Heart right ventricle (tissue), 16 donors: ENCODE measurements at regions of chr4 and their contacts with region 1.

Region 1: DNA sequence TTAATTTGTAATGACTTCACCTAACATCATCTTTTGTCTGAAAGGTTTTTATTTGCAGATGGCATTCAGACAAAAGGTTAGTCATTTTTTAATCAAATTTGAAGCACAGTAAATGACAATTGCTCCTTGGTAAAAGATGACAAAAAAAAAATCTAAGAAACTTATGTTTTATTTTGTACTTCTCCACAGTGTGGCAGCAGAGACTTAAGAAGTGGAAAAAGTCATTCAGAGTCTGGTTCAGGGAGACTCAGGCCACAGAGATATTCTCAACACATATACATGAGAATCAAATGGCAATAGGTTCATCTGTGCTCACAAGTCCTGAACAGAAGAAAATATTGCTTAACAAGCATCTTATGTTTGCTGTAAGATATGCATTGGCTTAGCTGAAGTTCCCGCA is 436.2 kb downstream of the KCNIP4 start:
- DNase-seq: no peak
- ATAC-seq: no peak
- H3K4me3 ChIP-seq: no peak overlapping the region
- H3K27ac ChIP-seq: no peak overlapping the region
- H3K4me1 ChIP-seq: no peaks in the 10 kb centered on the region
- H3K27me3 ChIP-seq: no peaks in the 10 kb centered on the region
- CTCF ChIP-seq: peak in 8 of 9 donors; percentile 12 to 59 (median 37)

Region 2: DNA sequence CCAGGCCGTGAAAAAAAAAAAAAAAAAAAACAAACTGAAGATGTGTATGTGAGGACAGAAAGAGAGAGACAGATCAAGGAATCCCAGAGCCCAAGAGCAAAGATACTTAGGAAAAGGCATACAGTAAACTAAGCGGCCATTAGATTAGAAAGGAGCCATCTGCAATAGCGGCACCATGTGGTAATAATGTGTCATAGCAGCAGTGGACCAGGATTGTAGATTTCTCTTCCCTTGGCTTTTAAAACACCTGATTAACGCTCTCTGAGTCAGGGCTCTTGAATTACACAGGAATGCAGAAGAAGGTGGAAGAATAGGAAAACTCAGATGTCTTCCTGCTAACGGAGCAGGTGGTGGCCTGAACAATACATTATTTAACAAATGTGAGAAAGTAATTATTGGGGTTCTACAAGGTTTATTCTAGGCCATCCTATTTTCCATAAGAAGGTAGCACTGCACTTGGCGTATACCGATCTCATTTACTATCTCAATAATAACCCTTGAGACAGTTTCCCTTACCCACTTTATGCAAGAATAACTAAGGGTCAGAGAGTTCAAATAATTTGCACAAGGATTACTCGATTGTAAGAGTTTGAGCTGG is 253.6 kb after region 1 on chr4:
- intact Hi-C with region 1: loop called in 9 of 10 experiments (anchors 2 to 5 kb)
- DNase-seq: no peak
- ATAC-seq: peak in 1 of 8 donors; percentile 37
- H3K4me3 ChIP-seq: no peak overlapping the region
- H3K27ac ChIP-seq: no peak overlapping the region
- H3K4me1 ChIP-seq: no peaks in the 10 kb centered on the region
- H3K27me3 ChIP-seq: no peaks in the 10 kb centered on the region
- CTCF ChIP-seq: peak; percentile 42 to 84 (median 74)